ENCODE measurements at regions of chr17 and their contacts with region 1.

Region 1: DNA sequence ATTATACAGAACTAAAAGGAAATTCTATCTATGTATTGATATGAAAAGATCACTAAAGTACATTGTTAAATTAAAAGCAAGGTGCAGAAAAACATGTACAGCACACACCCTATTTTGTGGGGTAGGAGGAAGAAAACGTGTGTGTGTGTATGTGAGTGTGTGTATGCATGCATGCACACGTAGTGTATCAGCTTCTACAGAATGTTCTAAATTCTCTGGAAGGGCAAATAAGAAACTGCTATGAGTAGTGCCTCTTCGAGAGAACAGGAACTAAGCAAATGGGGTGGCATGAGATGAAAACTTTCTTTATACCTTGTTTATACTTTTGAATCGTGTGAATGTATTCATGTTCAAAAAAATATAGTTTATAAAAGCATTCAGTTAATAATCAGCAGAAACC is 58.9 kb downstream of the TMC6 start:
- DNase-seq: no peak
- H3K4me3 ChIP-seq: no peak overlapping the region
- H3K27ac ChIP-seq: 0 out of 4 replicates have a peak overlapping the region, but pooled peaks of 1 of the 2 experiments have one; percentile 1
- H3K4me1 ChIP-seq: no peaks in the 10 kb centered on the region
- H3K27me3 ChIP-seq: no peaks in the 10 kb centered on the region
- CTCF ChIP-seq: no peak
- EP300 ChIP-seq: no peak
- RAD21 ChIP-seq: no peak

Region 2: GRCh38 chr17:77974396-77974795 is 95.3 kb before region 1 on chr17:
- CTCF ChIA-PET with region 1: no interaction called
- POLR2A ChIA-PET with region 1: no interaction called
- DNase-seq: no peak
- H3K4me3 ChIP-seq: no peak overlapping the region
- H3K27ac ChIP-seq: no peak overlapping the region
- H3K4me1 ChIP-seq: no peaks in the 10 kb centered on the region
- H3K27me3 ChIP-seq: no peaks in the 10 kb centered on the region
- CTCF ChIP-seq: no peak
- EP300 ChIP-seq: no peak
- RAD21 ChIP-seq: no peak

Region 3: GRCh38 chr17:78082988-78083387 is 13.3 kb after region 1 on chr17:
- CTCF ChIA-PET with region 1: interaction called, 21 read pairs
- POLR2A ChIA-PET with region 1: no interaction called
- DNase-seq: no peak
- H3K4me3 ChIP-seq: no peak overlapping the region
- H3K27ac ChIP-seq: no peak overlapping the region
- H3K4me1 ChIP-seq: no peaks in the 10 kb centered on the region
- H3K27me3 ChIP-seq: no peaks in the 10 kb centered on the region
- CTCF ChIP-seq: no peak
- EP300 ChIP-seq: no peak
- RAD21 ChIP-seq: no peak

Region 4: DNA sequence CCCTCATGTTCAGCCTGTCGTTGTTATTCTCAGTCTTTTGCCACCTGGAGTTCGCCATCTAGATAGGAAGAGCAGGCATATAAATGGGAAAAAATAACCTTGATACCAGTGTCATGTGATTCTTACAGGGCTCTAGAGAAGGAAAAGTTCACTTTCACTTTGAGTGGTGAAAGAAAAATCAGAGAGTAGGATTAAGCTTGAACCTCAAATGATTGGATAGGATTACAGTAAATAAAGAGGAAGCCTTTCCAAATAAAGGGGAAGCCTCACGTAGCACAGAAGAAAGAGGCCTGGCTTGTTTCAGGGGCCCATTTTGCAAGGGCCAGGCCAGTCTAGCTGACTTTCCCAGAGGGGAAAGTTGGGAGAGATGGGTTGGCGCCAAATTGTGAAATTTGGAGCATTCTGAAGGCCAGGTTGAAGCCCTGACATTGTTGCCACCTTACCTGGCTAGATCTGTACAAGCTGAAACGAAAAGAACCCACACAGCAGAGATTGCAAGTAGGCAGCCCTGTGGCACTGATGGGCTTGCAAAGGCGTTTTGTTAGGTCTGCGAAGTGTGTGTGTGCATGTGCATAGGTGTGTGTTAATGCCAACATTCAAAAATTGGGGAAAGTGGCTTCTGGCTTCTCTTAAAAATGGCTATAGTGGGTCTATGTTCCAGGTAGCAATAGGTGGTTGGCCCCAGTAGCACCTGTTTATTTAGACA is 20.0 kb after region 1 on chr17:
- CTCF ChIA-PET with region 1: interaction called, 21 read pairs
- POLR2A ChIA-PET with region 1: no interaction called
- DNase-seq: no peak
- H3K4me3 ChIP-seq: no peak overlapping the region
- H3K27ac ChIP-seq: no peak overlapping the region
- H3K4me1 ChIP-seq: peaks cover 0 to 3% of the 10 kb centered on the region in 2 experiments; a peak in 1 of 4 replicates
- H3K27me3 ChIP-seq: no peaks in the 10 kb centered on the region
- CTCF ChIP-seq: no peak
- EP300 ChIP-seq: no peak
- RAD21 ChIP-seq: no peak

Region 5: DNA sequence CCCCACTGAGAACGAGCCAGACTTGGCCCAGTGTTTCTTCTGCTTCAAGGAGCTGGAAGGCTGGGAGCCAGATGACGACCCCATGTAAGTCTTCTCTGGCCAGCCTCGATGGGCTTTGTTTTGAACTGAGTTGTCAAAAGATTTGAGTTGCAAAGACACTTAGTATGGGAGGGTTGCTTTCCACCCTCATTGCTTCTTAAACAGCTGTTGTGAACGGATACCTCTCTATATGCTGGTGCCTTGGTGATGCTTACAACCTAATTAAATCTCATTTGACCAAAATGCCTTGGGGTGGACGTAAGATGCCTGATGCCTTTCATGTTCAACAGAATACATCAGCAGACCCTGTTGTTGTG is 145.0 kb after region 1 on chr17:
- CTCF ChIA-PET with region 1: no interaction called
- POLR2A ChIA-PET with region 1: no interaction called
- DNase-seq: no peak
- H3K4me3 ChIP-seq: peak overlapping the region; percentile 62 to 87
- H3K27ac ChIP-seq: peak overlapping the region; percentile 29 to 39; a peak in 3 of 4 replicates
- H3K4me1 ChIP-seq: peaks cover 7 to 12% of the 10 kb centered on the region in 2 experiments; a peak in 2 of 4 replicates
- H3K27me3 ChIP-seq: no peaks in the 10 kb centered on the region
- CTCF ChIP-seq: no peak
- EP300 ChIP-seq: no peak
- RAD21 ChIP-seq: no peak

Measured in SK-N-SH (cell line).